GM12878 (cell line): ENCODE measurements at regions of chr4 and their contacts with region 1.

Region 1: DNA sequence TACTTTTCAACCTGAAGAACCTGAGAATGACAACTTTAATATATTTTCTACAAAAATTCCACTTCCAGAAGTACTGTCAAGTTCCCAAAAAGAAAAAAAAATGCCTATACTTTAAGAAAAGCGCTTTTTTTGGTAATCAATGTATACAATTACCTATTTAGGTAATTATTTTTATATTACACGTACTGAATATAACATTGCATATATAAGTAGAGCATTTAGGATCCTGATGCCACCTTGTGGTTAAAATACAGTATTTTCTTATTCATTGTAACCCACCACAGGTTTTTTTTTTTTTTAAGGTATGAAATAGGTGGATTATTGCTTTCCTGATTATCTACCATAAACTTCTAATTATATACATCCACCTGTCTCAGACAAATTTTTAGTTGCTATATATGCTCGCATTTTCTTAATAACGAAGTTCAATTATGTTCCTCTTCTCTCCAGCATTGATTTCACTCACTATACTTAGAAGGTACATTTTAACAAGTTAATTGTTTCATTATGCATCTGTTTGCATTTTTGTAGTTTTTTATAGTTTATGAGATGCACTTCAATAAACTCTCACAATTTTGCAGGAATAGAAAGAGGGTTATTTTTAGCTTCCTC is 5.2 kb downstream of the MAP9 start:
- DNase-seq: no peak
- ATAC-seq: peak; percentile 54
- H3K4me3 ChIP-seq: no peak overlapping the region
- H3K27ac ChIP-seq: no peak overlapping the region
- H3K4me1 ChIP-seq: peaks cover 3% of the 10 kb centered on the region; the same call in 1 of the 2 replicates
- H3K27me3 ChIP-seq: no peaks in the 10 kb centered on the region
- CTCF ChIP-seq: peak in 2 of 3 experiments; percentile 19 to 39; a peak in 2 of 6 replicates
- EP300 ChIP-seq: no peak
- POLR2A ChIP-seq: no peak
- RAD21 ChIP-seq: peak; percentile 36; the same call in 1 of the 2 replicates

Region 2: DNA sequence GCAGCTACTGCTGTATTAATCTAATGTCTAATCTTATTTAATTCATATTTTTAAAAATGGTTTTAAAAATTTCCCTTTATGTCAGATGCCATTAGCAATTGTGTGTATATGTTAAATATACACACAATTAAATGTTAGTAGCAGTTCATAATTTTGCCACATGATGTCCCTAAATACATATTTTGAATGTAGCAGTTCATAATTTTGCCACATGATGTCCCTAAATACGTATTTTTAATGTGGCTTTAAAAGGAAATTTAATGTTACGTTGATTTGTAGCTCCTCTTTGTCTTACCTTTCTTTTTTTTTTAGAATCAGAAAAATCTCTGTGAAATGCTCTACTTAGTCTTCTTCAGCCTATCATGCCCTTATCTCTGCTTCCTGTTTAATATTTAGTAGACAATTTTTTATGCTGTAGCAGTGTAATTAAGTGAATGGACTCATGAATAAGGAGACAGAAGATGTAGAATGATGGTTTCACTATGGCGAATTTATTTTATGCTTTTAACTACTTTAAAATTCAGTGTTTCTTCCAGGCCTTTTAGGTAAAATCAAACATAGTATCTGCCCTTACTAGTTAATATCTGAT is 564.4 kb before region 1 on chr4:
- CTCF ChIA-PET with region 1: interaction called, 3 read pairs
- POLR2A ChIA-PET with region 1: no interaction called
- RAD21 ChIA-PET with region 1: interaction called, 3 read pairs
- SMC1A ChIA-PET with region 1: no interaction called
- in situ Hi-C with region 1: loop called (anchors 5 kb)
- intact Hi-C with region 1: loop called (anchors 5 kb)
- DNase-seq: peak; percentile 2
- ATAC-seq: peak; percentile 51; the same call in 2 of the 3 replicates
- H3K4me3 ChIP-seq: no peak overlapping the region
- H3K27ac ChIP-seq: no peak overlapping the region
- H3K4me1 ChIP-seq: no peaks in the 10 kb centered on the region
- H3K27me3 ChIP-seq: no peaks in the 10 kb centered on the region
- CTCF ChIP-seq: peak; percentile 37 to 76 (median 66); a peak in 5 of 6 replicates
- EP300 ChIP-seq: no peak
- POLR2A ChIP-seq: no peak
- RAD21 ChIP-seq: peak; percentile 55

Region 3: DNA sequence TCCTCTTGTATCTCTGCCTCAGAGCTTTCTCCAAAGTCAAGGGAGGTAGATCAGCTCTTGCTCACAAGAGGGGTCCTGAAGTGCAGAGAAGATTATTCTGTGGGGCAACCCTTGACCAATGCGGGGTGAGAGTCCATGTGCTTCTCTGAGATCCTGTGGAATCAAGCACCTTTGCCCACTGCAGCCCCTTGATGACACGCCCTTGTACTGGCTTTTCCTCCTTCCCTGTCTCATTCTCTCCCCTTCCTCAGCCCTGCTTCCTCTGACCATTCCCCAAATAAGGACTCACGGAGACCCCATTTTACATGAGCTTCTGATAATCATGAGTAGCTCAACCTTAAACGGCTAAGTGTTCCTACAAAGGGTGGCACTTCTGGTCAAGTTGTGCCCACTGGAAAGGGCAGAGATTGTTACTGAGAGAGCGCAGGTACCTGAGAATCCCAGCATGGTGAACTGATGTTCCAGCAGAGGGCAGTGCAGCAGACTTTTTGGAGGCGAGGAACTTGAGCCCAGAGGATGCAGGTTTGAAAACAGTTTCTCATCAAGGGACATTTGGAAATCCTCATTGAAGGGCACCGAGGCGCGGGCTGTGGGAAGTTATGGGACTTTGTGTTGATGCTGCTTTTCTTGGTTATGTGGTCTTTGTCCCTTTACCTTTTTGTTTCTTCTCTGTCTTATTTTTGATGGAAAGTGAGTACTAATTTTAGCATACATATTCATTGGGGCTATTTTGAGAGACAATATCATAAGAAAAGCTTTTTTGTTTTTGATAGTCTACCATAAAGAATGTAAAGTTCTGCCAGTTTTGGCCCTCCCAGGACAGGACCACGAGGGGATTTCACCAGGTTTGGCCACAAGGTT is 389.1 kb before region 1 on chr4:
- CTCF ChIA-PET with region 1: interaction called, 5 read pairs
- POLR2A ChIA-PET with region 1: no interaction called
- RAD21 ChIA-PET with region 1: no interaction called
- SMC1A ChIA-PET with region 1: interaction called, 10 read pairs
- in situ Hi-C with region 1: loop called (anchors 5 kb)
- intact Hi-C with region 1: loop called (anchors 1 kb)
- DNase-seq: peak; percentile 15
- ATAC-seq: peak; percentile 86
- H3K4me3 ChIP-seq: no peak overlapping the region
- H3K27ac ChIP-seq: no peak overlapping the region
- H3K4me1 ChIP-seq: no peaks in the 10 kb centered on the region
- H3K27me3 ChIP-seq: no peaks in the 10 kb centered on the region
- CTCF ChIP-seq: peak; percentile 72 to 73 (median 72)
- EP300 ChIP-seq: no peak
- POLR2A ChIP-seq: no peak
- RAD21 ChIP-seq: peak; percentile 71

Region 4: GRCh38 chr4:155025762-155026457 is 345.6 kb before region 1 on chr4:
- CTCF ChIA-PET with region 1: no interaction called
- POLR2A ChIA-PET with region 1: no interaction called
- RAD21 ChIA-PET with region 1: interaction called, 3 read pairs
- SMC1A ChIA-PET with region 1: interaction called, 5 read pairs
- in situ Hi-C with region 1: no loop called
- intact Hi-C with region 1: loop called (anchors 5 kb)
- DNase-seq: no peak
- ATAC-seq: peak; percentile 95
- H3K4me3 ChIP-seq: no peak overlapping the region
- H3K27ac ChIP-seq: no peak overlapping the region
- H3K4me1 ChIP-seq: no peaks in the 10 kb centered on the region
- H3K27me3 ChIP-seq: no peaks in the 10 kb centered on the region; a peak in 1 of 4 replicates
- CTCF ChIP-seq: peak; percentile 58 to 68 (median 58)
- EP300 ChIP-seq: no peak
- POLR2A ChIP-seq: no peak
- RAD21 ChIP-seq: peak; percentile 61